ENCODE measurements at regions of chr1 and their contacts with region 1.

Region 1: GRCh38 chr1:214328770-214329469 is 48.0 kb downstream of the SMYD2 start:
- DNase-seq: peak; percentile 81
- H3K4me3 ChIP-seq: no peak overlapping the region
- H3K27ac ChIP-seq: no peak overlapping the region
- H3K4me1 ChIP-seq: peaks cover 22% of the 10 kb centered on the region
- CTCF ChIP-seq: peak; percentile 88

Region 2: DNA sequence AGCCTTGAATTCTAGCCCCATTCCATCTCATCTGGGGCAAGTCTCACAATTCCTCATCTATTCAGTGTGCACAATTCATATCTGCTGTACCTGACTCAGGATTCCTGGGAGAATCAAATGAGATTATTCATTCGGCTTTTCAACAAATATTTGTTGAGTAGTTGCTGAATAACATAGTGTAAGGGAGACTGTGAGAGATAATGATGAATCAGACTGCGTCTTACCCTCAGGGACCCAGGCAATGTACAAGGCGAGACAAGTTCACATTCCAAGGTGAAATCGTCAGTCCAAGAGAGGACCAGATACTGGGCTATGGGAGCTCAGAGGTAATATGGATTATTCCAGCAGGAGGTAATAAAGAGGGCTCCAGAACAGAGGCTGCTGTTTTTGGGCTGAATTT is 115.8 kb before region 1 on chr1:
- CTCF ChIA-PET with region 1: interaction called, 7 read pairs
- POLR2A ChIA-PET with region 1: no interaction called
- intact Hi-C with region 1: loop called (anchors 1 kb)
- DNase-seq: no peak
- H3K4me3 ChIP-seq: no peak overlapping the region
- H3K27ac ChIP-seq: no peak overlapping the region
- H3K4me1 ChIP-seq: no peaks in the 10 kb centered on the region
- CTCF ChIP-seq: no peak

Region 3: DNA sequence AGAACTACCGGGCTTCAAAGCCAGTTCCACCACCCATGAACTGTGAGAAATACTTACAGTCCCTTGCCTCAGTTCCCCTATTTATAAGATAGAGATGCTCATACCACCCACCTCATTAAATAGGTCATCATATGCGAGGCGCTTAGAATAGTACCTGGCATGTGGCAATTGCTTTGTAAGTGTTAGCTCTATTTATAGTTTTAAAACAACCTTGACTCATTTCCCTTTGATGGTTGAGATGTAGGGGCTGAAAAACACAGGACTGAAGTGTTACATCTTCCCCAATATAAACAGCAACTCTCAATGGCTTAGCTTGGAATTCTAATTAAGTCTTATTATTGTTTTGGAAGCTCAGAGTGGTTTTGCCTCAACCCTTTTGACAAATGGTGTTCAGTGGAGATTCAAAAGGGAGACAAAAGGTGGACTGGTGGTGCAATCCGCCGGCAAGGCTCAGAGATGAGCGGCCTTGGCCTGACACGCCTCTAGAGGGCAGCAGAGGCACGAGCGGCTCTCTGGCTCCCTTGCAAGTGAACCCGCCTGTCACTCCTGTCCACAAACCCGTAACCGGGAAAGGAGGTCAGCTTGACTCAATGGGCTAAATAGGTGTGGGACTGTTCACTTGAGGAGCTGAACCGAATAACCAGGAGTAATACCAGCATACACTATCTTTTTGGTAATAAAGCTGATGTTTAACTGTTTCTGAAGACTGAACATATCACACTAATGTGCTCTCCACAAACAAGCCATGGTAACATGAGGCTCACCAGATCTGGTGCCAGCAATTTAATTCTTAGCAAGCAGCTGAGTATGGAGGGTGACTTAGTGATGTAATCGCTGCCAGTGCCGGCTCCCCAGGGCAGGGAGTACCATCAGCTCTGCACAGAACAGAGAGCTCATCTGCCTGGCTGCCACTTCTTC is 67.5 kb before region 1 on chr1:
- CTCF ChIA-PET with region 1: interaction called, 76 read pairs
- POLR2A ChIA-PET with region 1: interaction called, 17 read pairs
- intact Hi-C with region 1: loop called (anchors 1 kb)
- DNase-seq: peak; percentile 73
- H3K4me3 ChIP-seq: no peak overlapping the region
- H3K27ac ChIP-seq: no peak overlapping the region
- H3K4me1 ChIP-seq: no peaks in the 10 kb centered on the region
- CTCF ChIP-seq: peak; percentile 95

Region 4: GRCh38 chr1:214281021-214281719 is 47.8 kb before region 1 on chr1 and contains the start of gene SMYD2:
- CTCF ChIA-PET with region 1: no interaction called
- POLR2A ChIA-PET with region 1: interaction called, 4 read pairs
- intact Hi-C with region 1: loop called (anchors 5 kb)
- DNase-seq: peak; percentile 80
- H3K4me3 ChIP-seq: peak within 1 kb of the TSS; percentile 72
- H3K27ac ChIP-seq: peak within 1 kb of the TSS; percentile 73
- H3K4me1 ChIP-seq: peaks cover 21% of the 10 kb centered on the region
- CTCF ChIP-seq: no peak
- total RNA-seq, gene SMYD2: 26.5 and 36.5 TPM in 2 replicates

Region 5: DNA sequence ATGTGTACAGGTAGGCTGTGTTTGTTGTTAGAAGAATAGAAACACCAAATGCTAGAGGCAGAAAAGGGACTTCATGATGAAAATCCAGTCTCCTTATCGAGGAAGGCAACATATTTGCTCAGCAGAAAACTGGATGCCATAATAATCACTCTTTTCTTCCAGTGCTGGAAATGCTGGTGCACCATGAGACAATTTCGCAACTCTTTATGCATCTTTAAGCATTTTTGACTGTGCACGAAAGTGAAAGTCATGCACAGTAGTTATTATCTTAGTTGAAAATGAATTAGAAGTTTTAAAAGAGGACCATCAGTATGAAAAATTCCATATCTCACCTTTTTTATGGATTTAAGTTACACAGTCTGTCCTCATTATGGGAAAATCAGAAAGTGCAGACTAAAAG is 18.9 kb before region 1 on chr1:
- CTCF ChIA-PET with region 1: no interaction called
- POLR2A ChIA-PET with region 1: no interaction called
- intact Hi-C with region 1: no loop called
- DNase-seq: no peak
- H3K4me3 ChIP-seq: no peak overlapping the region
- H3K27ac ChIP-seq: no peak overlapping the region
- H3K4me1 ChIP-seq: no peaks in the 10 kb centered on the region
- CTCF ChIP-seq: no peak

Region 6: GRCh38 chr1:214584805-214585766 is 256.2 kb after region 1 on chr1:
- CTCF ChIA-PET with region 1: no interaction called
- POLR2A ChIA-PET with region 1: no interaction called
- intact Hi-C with region 1: loop called (anchors 2 kb)
- DNase-seq: no peak
- H3K4me3 ChIP-seq: no peak overlapping the region
- H3K27ac ChIP-seq: no peak overlapping the region
- H3K4me1 ChIP-seq: no peaks in the 10 kb centered on the region
- CTCF ChIP-seq: peak; percentile 76

Region 7: GRCh38 chr1:215526553-215527151 is 1197.7 kb after region 1 on chr1:
- CTCF ChIA-PET with region 1: interaction called, 3 read pairs
- POLR2A ChIA-PET with region 1: no interaction called
- intact Hi-C with region 1: loop called (anchors 5 kb)
- DNase-seq: peak; percentile 53
- H3K4me3 ChIP-seq: no peak overlapping the region
- H3K27ac ChIP-seq: no peak overlapping the region
- H3K4me1 ChIP-seq: no peaks in the 10 kb centered on the region
- CTCF ChIP-seq: peak; percentile 87